Left colon (tissue), 2 donors: ENCODE measurements at regions of chr17 and their contacts with region 1.

Region 1: DNA sequence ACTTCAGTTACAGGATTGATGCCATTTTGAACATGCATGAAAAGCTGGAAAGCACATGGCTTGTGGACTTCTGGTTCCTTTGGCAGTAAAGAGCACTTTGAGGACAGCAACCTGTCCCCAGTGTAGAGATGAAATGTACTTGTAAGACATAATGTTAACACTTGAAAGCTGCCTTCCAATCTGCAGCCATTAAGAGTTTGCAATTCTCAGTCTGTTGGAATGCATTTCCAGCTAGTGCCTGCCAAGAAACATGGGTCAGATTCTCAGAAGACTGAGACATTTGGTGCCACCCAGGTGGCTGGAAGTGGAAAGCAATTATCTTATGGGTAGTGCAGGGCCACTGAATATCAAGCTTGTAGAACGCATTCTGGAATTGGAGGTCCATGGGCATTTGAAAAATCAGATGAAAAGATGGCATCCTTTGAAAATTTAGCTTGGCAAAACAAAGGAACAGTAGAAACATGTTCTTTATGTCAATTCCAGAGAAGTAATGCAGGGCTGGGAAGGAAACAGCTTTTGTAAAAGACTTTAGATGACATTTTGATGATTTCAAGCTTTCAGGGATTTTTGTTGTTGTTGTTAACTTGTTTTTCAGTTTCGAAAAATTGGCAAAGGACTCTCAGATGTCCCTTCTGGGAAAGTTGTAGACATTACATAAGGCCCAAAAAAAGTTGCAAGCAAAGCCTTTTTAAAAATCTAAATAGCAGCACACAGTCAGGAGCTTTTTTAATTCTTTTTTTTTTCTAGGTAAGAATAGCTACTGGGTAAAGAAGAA is 147.0 kb downstream of the ABCA8 start:
- DNase-seq: no peak
- ATAC-seq: no peak

Region 2: DNA sequence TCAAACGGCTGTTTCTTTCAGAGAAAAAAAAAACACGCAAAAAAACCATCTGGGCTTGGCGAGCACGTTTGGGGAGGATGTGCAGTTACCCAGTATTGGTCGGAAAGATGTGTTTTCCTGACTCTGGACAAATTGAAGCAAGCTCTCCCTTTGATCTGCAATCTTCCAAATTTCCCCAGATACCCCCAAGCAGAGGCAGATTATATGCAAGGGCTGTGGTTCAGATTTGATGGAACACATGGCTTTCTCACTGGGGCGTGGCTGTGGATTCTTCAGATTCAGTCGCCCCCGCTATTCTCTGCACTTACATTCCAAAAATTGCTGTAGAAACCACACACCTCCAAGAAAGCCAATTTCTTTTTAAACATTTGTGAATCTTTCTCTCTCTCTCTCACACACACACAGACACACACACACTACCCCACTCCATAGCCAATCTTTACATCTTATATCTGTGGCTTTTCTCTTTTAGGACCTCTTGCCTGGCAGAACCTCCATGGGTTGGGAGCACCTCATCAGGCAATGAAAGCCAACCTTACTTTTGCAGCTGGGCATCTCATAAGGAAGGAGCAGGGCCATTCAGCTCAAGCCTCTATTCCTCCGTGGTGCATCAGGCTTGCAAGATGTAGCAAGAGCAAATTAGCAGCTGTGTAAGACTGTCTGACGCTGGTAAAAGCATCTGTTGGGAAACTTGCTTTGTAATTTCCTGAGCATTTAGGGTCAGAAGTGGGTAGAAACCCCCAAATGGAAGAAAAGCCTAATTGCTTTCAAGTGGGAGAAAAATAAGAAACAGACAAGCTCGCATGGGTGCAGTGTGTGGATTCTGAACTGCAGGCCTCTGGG is 103.1 kb before region 1 on chr17:
- intact Hi-C with region 1: no loop called
- DNase-seq: no peak
- ATAC-seq: no peak

Region 3: GRCh38 chr17:68749349-68750207 is 58.6 kb before region 1 on chr17:
- intact Hi-C with region 1: no loop called
- DNase-seq: no peak
- ATAC-seq: no peak

Region 4: DNA sequence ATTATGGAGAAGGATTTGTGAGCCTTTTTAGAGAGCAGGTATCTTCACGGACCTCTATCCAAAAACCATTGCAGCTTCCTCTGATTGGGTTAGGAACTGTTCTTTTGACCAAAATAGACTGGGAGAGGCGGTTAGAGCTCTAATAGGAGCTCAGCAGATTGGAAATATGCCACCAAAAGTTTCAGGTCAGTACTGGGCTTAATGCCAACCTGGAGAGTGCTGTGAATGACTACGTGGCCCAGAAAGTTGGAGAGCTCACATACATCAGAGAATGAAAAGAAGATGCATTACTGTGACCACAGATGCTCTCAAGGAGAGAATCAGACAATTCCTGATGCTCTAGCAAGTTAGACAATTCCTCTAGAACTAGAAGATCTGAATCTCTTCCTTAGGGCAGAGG is 60.5 kb after region 1 on chr17:
- intact Hi-C with region 1: loop called in 1 of 2 experiments (anchors 10 kb)
- DNase-seq: no peak
- ATAC-seq: no peak

Region 5: DNA sequence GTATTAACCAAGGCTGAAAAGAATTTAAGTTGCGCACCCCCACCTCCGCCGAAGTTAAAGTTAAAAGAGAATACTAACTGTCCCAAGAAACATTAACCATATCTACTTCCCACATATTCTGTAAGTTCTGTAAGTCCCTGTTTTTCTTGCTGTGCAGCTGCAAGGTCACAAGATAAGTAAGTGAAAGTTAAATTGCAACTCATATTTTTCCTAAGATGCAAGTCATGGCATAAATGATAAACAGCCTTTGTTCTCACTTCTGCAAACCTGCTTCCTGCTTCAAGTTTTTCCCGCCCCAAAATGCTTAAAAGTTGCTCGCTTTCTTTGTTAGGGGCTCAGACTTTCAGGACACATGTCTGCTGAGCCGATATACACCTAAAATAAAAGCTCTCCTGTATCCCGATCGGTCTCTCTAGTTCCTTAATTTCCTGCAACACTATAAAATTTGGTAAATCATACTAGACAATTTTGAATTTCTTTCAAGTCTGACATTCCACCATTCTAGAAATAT is 285.1 kb after region 1 on chr17:
- intact Hi-C with region 1: no loop called
- DNase-seq: no peak
- ATAC-seq: no peak